ENCODE measurements at regions of chr2 and their contacts with region 1.

Region 1: DNA sequence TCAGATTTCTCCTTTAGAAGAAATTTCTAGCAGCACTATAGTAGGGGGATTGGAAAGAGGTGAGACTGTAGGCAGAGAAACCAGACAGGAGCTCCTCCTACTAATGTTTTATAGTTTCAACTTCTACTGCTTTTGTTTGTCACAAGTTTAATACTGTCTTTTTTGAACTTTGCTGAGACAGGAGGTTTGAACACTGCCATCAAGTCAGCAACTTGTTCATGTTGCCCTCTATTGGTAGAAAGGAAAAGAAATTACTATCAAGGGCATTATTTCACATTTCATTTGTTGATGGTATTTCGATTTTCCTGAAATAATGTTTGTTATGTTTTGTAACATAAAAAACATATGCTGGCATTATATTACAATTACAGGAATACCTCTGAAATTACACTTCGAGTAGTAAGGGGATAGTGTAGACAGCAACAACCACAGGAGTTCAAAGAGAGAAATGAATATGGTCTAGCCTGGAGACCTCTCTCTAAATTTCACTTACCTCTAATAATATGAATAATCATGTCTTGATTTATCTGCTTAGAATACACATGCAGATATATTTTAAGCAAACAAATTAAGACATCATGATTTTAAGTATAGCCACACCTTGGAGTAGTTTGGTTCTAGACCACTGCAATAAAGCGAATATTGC is 12.4 kb upstream of the CCDC88A start:
- DNase-seq: peak; percentile 61
- ATAC-seq: peak; percentile 68
- H3K4me3 ChIP-seq: no peak overlapping the region
- H3K27ac ChIP-seq: no peak overlapping the region
- H3K4me1 ChIP-seq: peaks cover 6% of the 10 kb centered on the region; the same call in 1 of the 2 replicates
- H3K27me3 ChIP-seq: no peaks in the 10 kb centered on the region
- CTCF ChIP-seq: peak; percentile 84

Region 2: DNA sequence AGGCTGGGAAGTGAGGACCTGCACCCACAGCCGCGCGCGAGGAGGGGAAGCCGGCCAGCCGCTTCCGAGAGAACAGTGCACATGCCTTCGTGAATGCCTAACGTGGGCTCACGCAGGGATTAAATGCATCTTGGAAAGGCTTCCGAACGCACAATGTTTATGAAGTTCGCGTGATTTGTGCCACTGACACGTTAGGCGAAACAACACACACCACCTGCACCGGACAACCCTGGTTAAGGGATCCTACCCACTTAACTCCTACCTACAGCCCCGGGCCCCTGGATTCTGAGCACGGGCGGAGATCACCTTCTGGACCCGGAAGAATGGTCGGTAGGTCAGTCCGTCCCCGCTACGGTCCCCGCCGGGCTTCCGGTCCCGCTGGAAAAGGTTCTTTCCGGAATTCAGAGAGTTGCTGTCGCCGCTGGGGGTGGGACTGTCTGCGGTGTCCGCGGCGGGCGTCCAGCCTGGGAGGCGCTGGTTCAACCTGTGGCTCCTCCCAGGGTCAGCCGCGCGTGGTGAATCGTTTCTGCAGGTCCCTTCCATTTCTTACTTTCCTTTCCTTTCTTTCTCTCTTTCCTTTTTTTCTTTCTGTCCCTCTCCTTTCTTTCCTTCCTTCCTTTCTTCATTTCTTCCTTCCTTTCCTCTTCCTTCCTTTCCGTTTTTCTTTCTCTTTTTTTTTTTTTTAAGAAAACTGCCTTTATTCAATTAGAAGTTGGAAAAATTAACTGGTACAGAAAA is 163.0 kb before region 1 on chr2 and contains the start of gene MTIF2:
- CTCF ChIA-PET with region 1: no interaction called
- POLR2A ChIA-PET with region 1: no interaction called
- intact Hi-C with region 1: loop called (anchors 2 kb)
- DNase-seq: peak; percentile 97
- ATAC-seq: peak; percentile 98
- H3K4me3 ChIP-seq: peak within 1 kb of the TSS; percentile 90
- H3K27ac ChIP-seq: peak within 1 kb of the TSS; percentile 57
- H3K4me1 ChIP-seq: peaks cover 12% of the 10 kb centered on the region
- H3K27me3 ChIP-seq: no peaks in the 10 kb centered on the region
- CTCF ChIP-seq: no peak
- total RNA-seq, gene MTIF2: 46.5 and 49.6 TPM in 2 replicates

Region 3: GRCh38 chr2:55511508-55512124 is 79.5 kb after region 1 on chr2:
- CTCF ChIA-PET with region 1: no interaction called
- POLR2A ChIA-PET with region 1: no interaction called
- intact Hi-C with region 1: loop called (anchors 5 kb)
- DNase-seq: peak; percentile 73
- ATAC-seq: peak; percentile 84
- H3K4me3 ChIP-seq: no peak overlapping the region
- H3K27ac ChIP-seq: no peak overlapping the region
- H3K4me1 ChIP-seq: no peaks in the 10 kb centered on the region
- H3K27me3 ChIP-seq: no peaks in the 10 kb centered on the region
- CTCF ChIP-seq: peak; percentile 70

Region 4: DNA sequence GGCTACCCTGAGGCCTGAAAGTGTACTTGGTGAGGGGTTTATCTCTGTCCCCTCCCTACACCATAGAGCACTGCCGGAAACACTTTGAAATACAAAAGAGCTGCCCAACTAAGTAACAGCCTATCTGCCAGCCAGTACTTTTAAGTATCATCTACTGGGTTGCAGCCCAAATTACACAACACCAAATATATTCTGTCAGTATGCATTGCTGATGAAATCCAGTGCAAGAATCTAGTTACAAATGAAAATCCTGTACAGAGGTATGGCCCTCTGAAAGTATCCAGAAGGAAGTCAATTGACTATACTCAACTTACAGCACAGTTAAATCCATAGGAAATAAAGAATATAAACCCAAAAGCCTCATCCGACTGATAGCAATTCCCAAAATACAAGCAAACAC is 1032.5 kb after region 1 on chr2:
- CTCF ChIA-PET with region 1: no interaction called
- POLR2A ChIA-PET with region 1: no interaction called
- intact Hi-C with region 1: no loop called
- DNase-seq: no peak
- ATAC-seq: no peak
- H3K4me3 ChIP-seq: no peak overlapping the region
- H3K27ac ChIP-seq: no peak overlapping the region
- H3K4me1 ChIP-seq: no peaks in the 10 kb centered on the region
- H3K27me3 ChIP-seq: no peaks in the 10 kb centered on the region
- CTCF ChIP-seq: no peak